OCI-LY7 (cell line): ENCODE measurements at regions of chr1 and their contacts with region 1.

Region 1: DNA sequence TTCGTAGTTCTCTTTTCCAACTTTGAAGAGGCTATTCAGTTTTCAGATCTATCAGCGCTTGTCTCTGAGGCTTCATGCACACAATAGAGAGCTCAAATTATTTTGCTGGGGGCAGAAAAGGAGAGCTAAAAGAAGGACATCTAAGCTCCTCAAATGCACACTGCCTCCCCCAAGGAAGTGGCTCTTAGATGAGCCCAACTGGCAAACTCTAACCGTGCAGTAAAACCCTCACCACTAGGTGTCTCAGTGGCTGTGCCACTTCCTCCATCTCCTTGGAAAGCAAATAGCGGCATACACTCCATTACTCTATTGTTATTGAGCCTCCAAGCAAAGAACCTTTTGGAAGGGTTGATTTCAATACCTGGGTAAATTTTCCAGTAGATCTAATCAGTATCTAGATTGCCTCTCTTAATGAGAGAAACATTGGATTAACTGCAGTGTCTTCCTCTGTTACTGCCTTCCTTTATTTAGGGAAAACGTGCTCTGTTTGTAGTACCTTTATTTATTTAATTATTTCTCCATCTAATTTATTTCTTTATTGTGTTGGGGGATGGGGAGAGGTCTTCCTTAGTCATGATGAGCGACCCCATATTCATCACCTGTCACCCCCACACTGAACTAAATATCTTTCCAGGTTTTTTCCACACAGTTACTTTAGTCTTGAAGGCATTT is 9.2 kb upstream of the SFPQ start:
- DNase-seq: peak; percentile 89
- H3K4me3 ChIP-seq: peak overlapping the region; percentile 3
- H3K27ac ChIP-seq: peak overlapping the region; percentile 48
- H3K4me1 ChIP-seq: peaks cover 14% of the 10 kb centered on the region
- CTCF ChIP-seq: peak; percentile 97

Region 2: DNA sequence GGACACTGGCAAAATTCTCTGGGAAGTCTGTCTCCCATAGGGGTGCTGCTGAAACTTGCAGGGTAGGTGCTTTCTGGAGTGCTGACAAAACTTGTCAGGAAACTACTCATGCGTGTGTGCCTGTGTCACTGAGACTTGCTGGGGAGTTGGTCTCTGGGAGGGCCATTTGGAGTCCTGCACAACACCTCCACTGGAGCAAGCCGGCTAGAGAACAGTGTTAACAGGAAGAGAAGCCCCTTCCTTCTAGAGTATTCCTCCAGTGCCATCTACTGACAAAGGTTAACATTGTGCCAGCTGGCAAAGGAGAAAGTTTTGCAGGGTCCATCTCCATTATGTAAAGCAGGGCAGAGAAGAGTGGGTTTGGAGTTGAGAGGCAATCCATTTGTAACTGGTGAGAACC is 96.3 kb after region 1 on chr1:
- CTCF ChIA-PET with region 1: no interaction called
- POLR2A ChIA-PET with region 1: no interaction called
- intact Hi-C with region 1: loop called (anchors 1 kb)
- DNase-seq: peak; percentile 63
- H3K4me3 ChIP-seq: no peak overlapping the region
- H3K27ac ChIP-seq: no peak overlapping the region
- H3K4me1 ChIP-seq: peaks cover 9% of the 10 kb centered on the region
- CTCF ChIP-seq: peak; percentile 80

Region 3: GRCh38 chr1:35319988-35320713 is 118.0 kb after region 1 on chr1:
- CTCF ChIA-PET with region 1: no interaction called
- POLR2A ChIA-PET with region 1: no interaction called
- intact Hi-C with region 1: no loop called
- DNase-seq: no peak
- H3K4me3 ChIP-seq: no peak overlapping the region
- H3K27ac ChIP-seq: no peak overlapping the region
- H3K4me1 ChIP-seq: no peaks in the 10 kb centered on the region
- CTCF ChIP-seq: no peak

Region 4: GRCh38 chr1:35426097-35426586 is 224.0 kb after region 1 on chr1:
- CTCF ChIA-PET with region 1: no interaction called
- POLR2A ChIA-PET with region 1: interaction called, 3 read pairs
- intact Hi-C with region 1: loop called (anchors 10 kb)
- DNase-seq: no peak
- H3K4me3 ChIP-seq: no peak overlapping the region
- H3K27ac ChIP-seq: no peak overlapping the region
- H3K4me1 ChIP-seq: peaks cover 5% of the 10 kb centered on the region
- CTCF ChIP-seq: no peak

Region 5: DNA sequence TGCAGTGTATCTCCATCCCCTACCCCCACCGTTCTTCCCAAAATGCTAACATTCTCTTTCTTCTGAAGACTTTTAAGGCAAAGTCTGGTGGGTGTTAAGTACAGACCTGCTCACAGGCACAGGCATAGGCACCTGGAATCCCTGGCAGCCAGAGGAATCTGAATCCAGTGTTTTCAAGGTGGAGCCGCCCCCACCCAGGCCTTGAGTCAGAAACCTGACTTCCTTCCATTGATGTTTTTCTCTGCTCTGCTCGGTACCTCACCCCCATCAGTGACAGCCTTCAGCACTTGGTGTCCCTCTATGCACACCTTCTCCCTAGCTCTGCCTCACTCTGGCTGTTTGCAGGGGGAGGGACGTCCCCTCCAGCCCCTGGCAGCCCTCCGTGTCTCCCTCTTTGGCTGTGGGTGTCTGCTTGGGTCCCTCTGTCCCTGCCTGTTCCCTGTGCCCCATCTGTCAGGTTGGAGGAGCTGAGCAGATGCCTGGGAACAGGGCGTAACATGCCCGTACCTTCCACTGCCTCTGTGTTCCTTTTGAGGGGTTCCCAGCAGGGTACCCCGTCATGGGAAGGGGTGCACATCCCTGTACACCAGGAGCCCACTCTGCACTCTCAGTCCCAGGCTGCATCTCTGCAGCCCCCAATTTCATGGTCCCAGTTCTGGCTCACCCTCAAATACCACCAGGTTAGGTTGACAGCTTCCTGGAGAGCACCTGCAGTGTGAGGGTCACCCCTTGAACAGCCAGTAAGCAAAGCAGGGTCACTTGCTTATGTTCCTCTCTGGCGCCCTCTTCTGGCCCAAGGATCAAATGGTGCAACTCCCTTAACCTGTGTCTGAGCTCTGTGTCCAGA is 362.1 kb after region 1 on chr1:
- CTCF ChIA-PET with region 1: no interaction called
- POLR2A ChIA-PET with region 1: no interaction called
- intact Hi-C with region 1: loop called (anchors 5 kb)
- DNase-seq: peak; percentile 85
- H3K4me3 ChIP-seq: no peak overlapping the region
- H3K27ac ChIP-seq: no peak overlapping the region
- H3K4me1 ChIP-seq: no peaks in the 10 kb centered on the region
- CTCF ChIP-seq: peak; percentile 87